Dendritic cell treated with granulocyte-macrophage colony-stimulating factor and Interleukin-4, amounts not matched to agents 40 ng/mL and 50 ng/mL, for 4 days (primary cell): ENCODE measurements at regions of chr1 and their contacts with region 1.

Region 1: GRCh38 chr1:9867408-9868243 is 42.4 kb downstream of the CTNNBIP1 start:
- H3K4me3 Mint-ChIP-seq: no peak overlapping the region
- H3K27ac Mint-ChIP-seq: no peak overlapping the region
- H3K4me1 Mint-ChIP-seq: peaks cover 17% of the 10 kb centered on the region
- H3K27me3 Mint-ChIP-seq: no peaks in the 10 kb centered on the region

Region 2: DNA sequence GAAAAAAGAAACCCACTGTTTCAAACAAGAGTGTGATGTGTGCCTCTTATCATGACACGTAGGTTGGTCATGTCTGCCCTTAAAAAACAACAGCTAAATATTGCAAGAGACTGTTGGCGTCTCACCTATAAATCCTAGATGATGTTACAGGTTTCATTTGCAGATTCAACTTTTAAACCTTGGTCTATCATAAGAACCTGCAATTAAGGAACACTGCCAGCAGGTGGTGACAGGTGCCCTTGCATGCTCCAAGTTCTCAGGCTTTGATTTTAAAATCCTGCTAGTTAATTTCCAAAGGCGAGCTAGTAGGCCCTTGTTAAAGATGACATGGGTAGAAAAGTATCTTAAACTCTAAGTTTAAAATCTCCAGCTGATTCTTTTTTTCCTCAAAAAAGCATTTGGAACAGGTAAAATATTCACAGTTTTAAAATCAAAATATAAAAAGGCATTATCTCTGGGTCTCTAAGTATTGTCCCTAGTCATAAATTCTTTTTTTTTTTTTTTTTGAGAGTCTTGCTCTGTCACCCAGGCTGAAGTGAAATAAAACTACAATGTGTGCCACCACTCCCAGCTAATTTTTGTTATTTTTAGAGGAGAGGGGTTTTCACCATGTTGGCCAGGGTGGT is 83.0 kb before region 1 on chr1:
- intact Hi-C with region 1: loop called (anchors 1 kb)
- H3K4me3 Mint-ChIP-seq: no peak overlapping the region
- H3K27ac Mint-ChIP-seq: no peak overlapping the region
- H3K4me1 Mint-ChIP-seq: peaks cover 16% of the 10 kb centered on the region
- H3K27me3 Mint-ChIP-seq: no peaks in the 10 kb centered on the region

Region 3: DNA sequence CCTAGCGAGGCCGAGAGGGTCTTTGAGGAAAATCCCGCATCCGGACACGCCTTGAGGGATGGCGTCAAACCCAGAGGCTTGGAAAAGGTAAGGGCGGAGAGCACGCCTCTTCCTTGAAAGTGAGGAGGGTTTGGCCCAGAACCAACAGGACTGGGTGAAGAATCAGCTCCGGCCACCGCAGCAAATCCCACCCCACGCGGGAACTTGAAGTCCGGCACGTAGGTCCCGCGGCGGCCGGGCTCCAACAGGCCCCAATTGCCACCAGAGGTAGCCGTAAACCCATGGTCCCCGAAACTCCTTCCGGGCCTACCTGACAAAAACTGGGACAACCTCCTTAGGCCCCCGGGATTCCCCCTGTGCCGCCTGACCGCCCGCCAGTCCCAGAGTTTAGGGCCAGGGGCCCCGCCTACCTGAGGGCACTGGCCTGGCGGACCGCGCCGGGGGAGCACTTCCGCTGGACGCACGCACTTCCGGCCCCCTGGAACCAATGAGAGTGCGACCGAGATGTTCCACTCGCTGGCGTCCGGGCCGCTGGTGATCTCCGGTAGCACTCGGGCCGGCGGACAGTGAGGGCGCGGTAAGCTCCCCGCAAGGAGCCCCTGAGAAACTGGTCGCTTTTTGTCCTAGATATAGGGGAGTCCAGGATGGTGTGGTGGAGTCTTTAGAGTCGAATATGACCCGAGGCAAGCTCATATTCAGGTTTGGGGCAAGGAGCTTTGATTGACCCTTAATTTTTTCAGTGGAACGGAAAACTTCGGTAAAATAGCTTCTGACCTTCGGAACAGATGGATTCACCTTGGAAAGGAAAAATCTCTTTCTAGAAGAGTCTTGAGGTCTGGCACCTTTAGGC is 75.5 kb after region 1 on chr1 and contains the starts of genes LZIC and NMNAT1:
- intact Hi-C with region 1: no loop called
- H3K4me3 Mint-ChIP-seq: peak within 1 kb of the TSS; percentile 87
- H3K27ac Mint-ChIP-seq: peak within 1 kb of the TSS; percentile 97
- H3K4me1 Mint-ChIP-seq: peaks cover 22% of the 10 kb centered on the region
- H3K27me3 Mint-ChIP-seq: no peaks in the 10 kb centered on the region